ENCODE measurements at regions of chr4 and their contacts with region 1.

Region 1: DNA sequence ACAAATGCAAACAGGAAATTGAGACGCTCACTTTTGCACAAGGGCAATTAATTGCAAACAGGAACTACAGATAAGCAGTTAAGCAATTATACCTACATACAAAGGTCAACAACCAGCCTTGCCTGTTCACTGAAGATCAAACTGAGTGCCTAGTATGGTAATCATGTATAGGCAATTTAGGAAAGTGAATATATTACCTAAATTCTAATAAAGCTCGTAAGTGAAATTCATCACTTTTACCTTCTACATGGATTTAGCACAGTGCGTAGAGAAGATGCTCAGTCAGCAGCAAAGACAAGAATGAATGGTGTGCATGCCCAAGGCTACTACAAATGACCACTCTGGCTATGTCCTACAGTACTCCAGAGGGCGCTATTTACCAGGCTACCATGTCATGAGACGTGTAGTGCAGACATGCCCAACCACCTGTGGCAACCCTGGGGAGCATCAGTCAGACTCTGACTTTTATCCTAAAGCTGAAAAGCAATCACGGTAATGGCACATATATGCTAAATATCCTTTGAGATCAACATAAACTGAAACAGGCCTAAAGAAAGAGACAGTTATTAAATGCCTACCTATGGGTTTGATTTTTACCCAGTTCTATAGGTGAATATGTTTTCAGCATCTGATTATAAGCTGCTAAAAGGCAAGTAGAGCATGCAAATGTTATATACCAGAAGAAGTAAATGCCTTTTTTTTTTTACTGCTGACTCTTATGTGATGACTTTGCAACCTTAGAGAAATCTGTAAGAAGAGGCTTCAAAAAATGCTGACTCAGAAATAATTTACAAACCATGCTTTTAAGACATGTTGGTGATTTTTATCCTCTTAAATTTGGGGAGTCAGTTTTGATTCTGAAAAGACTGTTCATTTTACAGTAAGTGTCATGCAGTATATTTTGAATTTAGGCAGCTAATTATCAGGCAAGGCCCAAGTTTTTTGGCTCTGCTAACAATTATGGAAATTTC is 178.0 kb downstream of the PPP3CA start:
- DNase-seq: peak; percentile 60
- H3K4me3 ChIP-seq: no peak overlapping the region
- H3K27ac ChIP-seq: no peak overlapping the region
- H3K4me1 ChIP-seq: no peaks in the 10 kb centered on the region
- H3K27me3 ChIP-seq: no peaks in the 10 kb centered on the region
- CTCF ChIP-seq: peak; percentile 49 to 71
- POLR2A ChIP-seq: no peak

Region 2: DNA sequence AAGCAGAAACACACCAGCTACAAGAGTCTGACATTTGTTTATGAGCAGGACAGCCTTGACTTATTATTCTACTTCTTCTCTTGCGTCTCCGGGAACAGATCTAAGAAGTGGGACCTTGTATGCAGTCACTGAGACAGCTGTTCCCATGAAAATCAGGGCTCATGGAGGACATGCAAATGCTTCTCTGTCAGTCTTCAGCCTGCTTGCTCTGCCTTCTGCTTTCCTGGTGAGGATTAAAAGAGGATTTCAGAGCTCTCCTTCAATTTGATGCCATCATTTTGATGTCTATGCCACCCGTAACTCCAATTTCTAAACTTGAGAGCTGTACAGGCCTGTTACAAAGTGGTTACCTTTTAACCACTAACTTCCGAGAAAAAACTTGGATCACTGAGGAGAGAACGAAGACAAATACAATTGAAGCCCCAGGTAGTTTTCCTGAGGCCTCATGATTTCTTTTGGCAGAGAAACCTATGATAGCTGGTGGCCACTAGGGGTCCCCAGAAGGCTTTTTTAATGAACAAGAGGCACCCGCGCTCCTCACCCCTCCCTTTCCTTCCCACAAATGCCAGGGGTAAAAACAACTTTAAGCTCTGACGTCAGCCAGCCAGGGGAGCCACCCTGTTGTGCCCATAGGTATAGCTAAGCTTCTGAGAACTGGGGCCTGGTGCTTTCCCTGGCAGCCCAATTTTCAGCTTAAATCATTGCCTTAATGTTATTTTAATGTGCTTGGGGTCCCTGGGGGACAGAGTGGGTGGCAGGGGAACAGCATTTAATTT is 1076.0 kb before region 1 on chr4:
- CTCF ChIA-PET with region 1: interaction called, 7 read pairs
- POLR2A ChIA-PET with region 1: no interaction called
- dilution Hi-C with region 1: no loop called
- intact Hi-C with region 1: loop called (anchors 10 kb)
- DNase-seq: peak; percentile 89
- H3K4me3 ChIP-seq: no peak overlapping the region
- H3K27ac ChIP-seq: peak overlapping the region; percentile 53
- H3K4me1 ChIP-seq: peaks cover 3% of the 10 kb centered on the region
- H3K27me3 ChIP-seq: no peaks in the 10 kb centered on the region
- CTCF ChIP-seq: peak; percentile 76 to 85
- POLR2A ChIP-seq: no peak

Region 3: GRCh38 chr4:100907465-100908454 is 261.6 kb before region 1 on chr4:
- CTCF ChIA-PET with region 1: interaction called, 3 read pairs
- POLR2A ChIA-PET with region 1: no interaction called
- dilution Hi-C with region 1: no loop called
- intact Hi-C with region 1: loop called (anchors 1 kb)
- DNase-seq: peak; percentile 47
- H3K4me3 ChIP-seq: no peak overlapping the region
- H3K27ac ChIP-seq: no peak overlapping the region
- H3K4me1 ChIP-seq: no peaks in the 10 kb centered on the region
- H3K27me3 ChIP-seq: no peaks in the 10 kb centered on the region
- CTCF ChIP-seq: peak; percentile 21 to 40
- POLR2A ChIP-seq: no peak

Region 4: DNA sequence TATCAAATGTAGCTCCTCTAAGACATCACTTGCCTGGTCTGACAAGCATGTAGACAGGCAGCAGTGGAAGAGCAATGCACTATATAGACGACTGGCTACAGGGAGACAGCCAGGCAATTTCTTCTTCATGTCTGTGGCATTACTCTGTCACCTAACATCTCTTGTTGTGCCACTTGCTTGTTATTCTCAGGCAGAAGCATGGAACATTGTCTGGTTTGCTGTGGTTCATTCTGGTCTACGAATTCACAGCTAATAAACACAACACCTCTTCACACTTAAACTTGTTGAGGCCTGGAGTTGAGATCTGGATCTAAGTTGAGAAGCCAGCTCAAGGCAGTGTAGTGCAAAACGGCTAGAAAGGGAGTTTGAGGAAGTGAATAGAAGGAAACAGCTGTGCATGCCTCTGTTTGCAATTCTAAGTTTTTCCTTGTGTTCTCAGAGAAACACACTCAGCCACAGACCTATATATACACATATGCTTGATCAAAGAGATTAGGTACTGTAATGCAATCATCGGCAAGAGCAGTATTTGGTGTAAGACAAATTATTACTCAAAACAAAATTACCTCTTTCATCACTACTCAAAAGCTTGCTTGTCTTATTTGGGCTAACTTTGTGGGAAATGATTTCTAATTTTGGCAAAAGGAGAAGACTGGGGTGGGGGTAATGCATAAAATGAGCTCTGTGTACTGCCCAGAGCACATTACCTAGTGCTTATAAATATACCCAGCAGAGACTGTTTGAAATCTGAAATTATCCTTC is 65.8 kb before region 1 on chr4:
- CTCF ChIA-PET with region 1: no interaction called
- POLR2A ChIA-PET with region 1: no interaction called
- dilution Hi-C with region 1: no loop called
- intact Hi-C with region 1: no loop called
- DNase-seq: peak; percentile 87
- H3K4me3 ChIP-seq: no peak overlapping the region
- H3K27ac ChIP-seq: peak overlapping the region; percentile 56
- H3K4me1 ChIP-seq: peaks cover 28% of the 10 kb centered on the region
- H3K27me3 ChIP-seq: no peaks in the 10 kb centered on the region
- CTCF ChIP-seq: no peak
- POLR2A ChIP-seq: no peak

Region 5: DNA sequence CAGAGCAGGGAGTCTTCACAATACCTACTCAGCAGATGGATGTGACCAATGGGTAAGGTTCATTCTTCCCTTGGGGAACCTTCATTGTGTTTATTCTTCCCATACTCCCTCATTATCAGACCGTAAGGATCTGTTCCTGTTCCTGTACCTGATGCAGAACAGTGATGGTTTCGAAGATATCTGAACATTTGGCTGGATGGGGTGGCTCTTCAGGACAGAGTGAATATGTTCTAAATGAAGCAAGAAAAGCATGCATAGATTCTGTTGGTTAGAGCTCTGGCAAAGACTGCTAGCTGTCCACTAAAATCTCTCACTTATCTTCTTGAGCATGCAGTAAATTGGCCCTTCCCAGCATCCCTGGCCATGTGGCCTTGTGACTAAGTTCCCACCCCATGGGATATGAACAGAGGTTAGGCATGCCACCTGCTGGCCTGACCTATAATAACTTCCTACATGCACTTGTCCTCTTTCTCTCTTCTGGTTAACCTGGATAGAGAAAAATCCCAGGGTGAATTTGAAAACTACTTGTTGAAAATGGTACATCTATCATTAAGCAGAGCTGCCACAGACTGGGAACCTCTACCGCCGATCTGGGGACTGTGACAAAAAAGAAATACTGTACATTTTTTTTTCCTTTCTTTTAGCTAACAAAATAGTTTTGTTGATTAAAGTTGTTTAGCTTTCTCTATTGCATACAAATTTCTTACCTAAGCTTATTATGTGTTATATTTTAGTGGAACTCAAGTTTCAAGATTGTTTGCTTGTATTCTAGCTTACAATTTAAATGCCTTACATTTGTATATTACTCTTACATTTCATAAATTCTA is 561.2 kb after region 1 on chr4:
- CTCF ChIA-PET with region 1: interaction called, 33 read pairs
- POLR2A ChIA-PET with region 1: no interaction called
- dilution Hi-C with region 1: no loop called
- intact Hi-C with region 1: loop called (anchors 1 kb)
- DNase-seq: peak; percentile 78
- H3K4me3 ChIP-seq: no peak overlapping the region
- H3K27ac ChIP-seq: no peak overlapping the region
- H3K4me1 ChIP-seq: no peaks in the 10 kb centered on the region
- H3K27me3 ChIP-seq: no peaks in the 10 kb centered on the region
- CTCF ChIP-seq: peak; percentile 58 to 63
- POLR2A ChIP-seq: no peak

Region 6: GRCh38 chr4:102139132-102139573 is 969.8 kb after region 1 on chr4:
- CTCF ChIA-PET with region 1: no interaction called
- POLR2A ChIA-PET with region 1: no interaction called
- dilution Hi-C with region 1: no loop called
- intact Hi-C with region 1: loop called (anchors 2 kb)
- DNase-seq: peak; percentile 98
- H3K4me3 ChIP-seq: peak overlapping the region in 1 of 3 experiments; percentile 8
- H3K27ac ChIP-seq: peak overlapping the region; percentile 99
- H3K4me1 ChIP-seq: peaks cover 40% of the 10 kb centered on the region
- H3K27me3 ChIP-seq: no peaks in the 10 kb centered on the region
- CTCF ChIP-seq: no peak
- POLR2A ChIP-seq: peak; percentile 52

Region 7: GRCh38 chr4:102439236-102439614 is 1269.9 kb after region 1 on chr4:
- CTCF ChIA-PET with region 1: no interaction called
- POLR2A ChIA-PET with region 1: no interaction called
- dilution Hi-C with region 1: no loop called
- intact Hi-C with region 1: loop called (anchors 10 kb)
- DNase-seq: peak; percentile 77
- H3K4me3 ChIP-seq: no peak overlapping the region
- H3K27ac ChIP-seq: no peak overlapping the region
- H3K4me1 ChIP-seq: no peaks in the 10 kb centered on the region
- H3K27me3 ChIP-seq: no peaks in the 10 kb centered on the region
- CTCF ChIP-seq: no peak
- POLR2A ChIP-seq: no peak